PC-9 (cell line): ENCODE measurements at regions of chr1 and their contacts with region 1.

Region 1: GRCh38 chr1:119675349-119676345 is 27.6 kb upstream of the ZNF697 start:
- DNase-seq: peak; percentile 78
- H3K4me3 ChIP-seq: peak overlapping the region; percentile 49
- H3K27ac ChIP-seq: peak overlapping the region; percentile 97
- H3K4me1 ChIP-seq: peaks cover 45% of the 10 kb centered on the region
- H3K27me3 ChIP-seq: no peaks in the 10 kb centered on the region
- CTCF ChIP-seq: peak; percentile 98

Region 2: DNA sequence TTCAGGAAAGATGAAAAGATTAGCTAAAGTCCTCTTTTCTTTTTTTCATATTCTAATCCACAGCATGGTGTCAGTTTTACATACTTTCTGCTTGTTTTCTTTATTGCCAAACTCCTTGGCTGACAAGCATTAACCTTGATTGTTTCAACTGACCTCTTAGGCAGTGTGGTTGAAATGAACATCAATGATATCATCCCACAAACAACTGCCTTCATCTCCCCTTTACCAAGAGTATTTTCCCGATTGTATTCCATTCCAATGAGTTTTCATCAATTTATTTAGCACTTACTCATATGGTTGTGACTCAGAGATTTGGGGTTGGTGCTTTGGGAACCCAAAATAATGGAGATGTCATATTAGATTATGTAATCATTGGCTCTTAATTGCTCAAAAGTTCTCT is 1562.4 kb before region 1 on chr1:
- CTCF ChIA-PET with region 1: no interaction called
- POLR2A ChIA-PET with region 1: no interaction called
- intact Hi-C with region 1: no loop called
- DNase-seq: peak in 1 of 2 experiments; percentile 40
- H3K4me3 ChIP-seq: no peak overlapping the region
- H3K27ac ChIP-seq: no peak overlapping the region
- H3K4me1 ChIP-seq: no peaks in the 10 kb centered on the region; the same call in 1 of the 2 replicates
- H3K27me3 ChIP-seq: no peaks in the 10 kb centered on the region
- CTCF ChIP-seq: no peak

Region 3: DNA sequence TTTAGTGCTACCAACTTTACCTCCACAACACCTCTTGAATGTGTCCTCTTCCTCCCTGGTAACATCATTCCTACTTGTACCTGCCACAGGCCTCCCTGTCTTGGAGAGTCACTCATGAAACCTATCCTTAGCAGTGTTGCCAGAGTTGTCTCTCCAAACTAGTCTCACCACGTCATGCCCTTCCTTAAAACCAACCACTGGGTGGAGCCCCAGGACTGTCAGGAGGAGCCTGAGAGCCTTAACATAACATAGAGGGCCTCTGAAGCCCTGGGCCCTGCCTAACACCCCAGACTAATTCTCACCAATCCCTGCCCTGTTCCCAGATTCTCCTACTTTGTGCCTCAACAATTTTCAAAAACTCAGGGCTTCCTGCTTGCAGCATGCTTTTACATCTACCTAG is 92.8 kb before region 1 on chr1:
- CTCF ChIA-PET with region 1: no interaction called
- POLR2A ChIA-PET with region 1: no interaction called
- intact Hi-C with region 1: loop called (anchors 1 kb)
- DNase-seq: peak; percentile 49 to 60
- H3K4me3 ChIP-seq: no peak overlapping the region
- H3K27ac ChIP-seq: no peak overlapping the region
- H3K4me1 ChIP-seq: no peaks in the 10 kb centered on the region; the same call in 1 of the 2 replicates
- H3K27me3 ChIP-seq: no peaks in the 10 kb centered on the region
- CTCF ChIP-seq: peak; percentile 80

Region 4: GRCh38 chr1:119647734-119648619 is 27.7 kb before region 1 on chr1 and contains the start of gene ZNF697:
- CTCF ChIA-PET with region 1: interaction called, 5 read pairs
- POLR2A ChIA-PET with region 1: interaction called, 7 read pairs
- intact Hi-C with region 1: loop called (anchors 1 kb)
- DNase-seq: peak; percentile 97 to 98
- H3K4me3 ChIP-seq: peak within 1 kb of the TSS; percentile 99
- H3K27ac ChIP-seq: peak within 1 kb of the TSS; percentile 43
- H3K4me1 ChIP-seq: peaks cover 26% of the 10 kb centered on the region
- H3K27me3 ChIP-seq: no peaks in the 10 kb centered on the region
- CTCF ChIP-seq: peak; percentile 45; the same call in 1 of the 2 replicates
- total RNA-seq, gene ZNF697: 3.6 and 4.1 TPM in 2 replicates

Region 5: DNA sequence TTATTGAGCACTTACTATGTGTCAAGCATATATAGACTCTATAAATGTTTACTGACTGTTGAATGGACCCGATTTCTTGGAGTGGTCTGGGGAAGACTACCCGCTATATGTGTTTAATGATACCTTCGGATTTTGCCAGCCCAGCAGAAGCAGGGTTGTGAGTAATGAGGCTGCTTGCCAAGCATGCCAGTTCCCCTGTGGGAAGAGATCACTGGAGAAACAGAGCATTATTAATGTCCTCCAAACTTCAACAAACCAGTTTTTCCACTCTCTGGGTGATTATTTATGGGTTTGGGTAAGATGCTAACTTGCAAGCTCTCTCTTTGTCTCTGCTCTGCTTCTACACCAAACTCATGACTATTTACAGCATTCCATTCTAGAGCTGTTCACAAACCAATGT is 11.0 kb after region 1 on chr1:
- CTCF ChIA-PET with region 1: interaction called, 4 read pairs
- POLR2A ChIA-PET with region 1: no interaction called
- intact Hi-C with region 1: loop called (anchors 1 kb)
- DNase-seq: peak; percentile 70 to 99
- H3K4me3 ChIP-seq: peak overlapping the region; percentile 17; the same call in 1 of the 2 replicates
- H3K27ac ChIP-seq: peak overlapping the region; percentile 82
- H3K4me1 ChIP-seq: peaks cover 47% of the 10 kb centered on the region
- H3K27me3 ChIP-seq: no peaks in the 10 kb centered on the region
- CTCF ChIP-seq: no peak

Region 6: GRCh38 chr1:119711804-119712341 is 36.2 kb after region 1 on chr1 and contains the start of gene PHGDH:
- CTCF ChIA-PET with region 1: interaction called, 3 read pairs
- POLR2A ChIA-PET with region 1: interaction called, 7 read pairs
- intact Hi-C with region 1: loop called (anchors 1 kb)
- DNase-seq: peak; percentile 78 to 89
- H3K4me3 ChIP-seq: peak within 1 kb of the TSS; percentile 93
- H3K27ac ChIP-seq: peak within 1 kb of the TSS; percentile 85
- H3K4me1 ChIP-seq: peaks cover 34% of the 10 kb centered on the region
- H3K27me3 ChIP-seq: no peaks in the 10 kb centered on the region
- CTCF ChIP-seq: no peak
- total RNA-seq, gene PHGDH: 373 and 569 TPM in 2 replicates

Region 7: DNA sequence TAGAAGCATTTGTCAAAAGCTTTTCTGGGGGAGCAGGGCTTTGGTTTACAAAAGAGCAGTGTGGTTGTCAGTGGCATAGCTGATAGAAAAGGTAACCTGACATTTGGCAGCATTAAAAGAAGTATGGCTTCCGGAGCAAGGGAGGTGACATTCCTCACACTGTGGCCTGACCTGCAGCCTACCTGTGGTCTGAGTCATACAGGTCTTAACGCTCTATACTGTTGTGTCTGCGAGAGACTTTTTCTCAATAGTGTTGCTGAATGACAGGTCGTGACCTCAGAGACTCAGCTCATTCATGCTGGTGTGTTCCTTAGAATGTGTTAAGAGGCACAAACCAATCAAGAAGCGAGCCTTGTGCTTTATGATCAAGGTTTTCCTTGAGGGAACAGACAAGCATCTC is 55.4 kb after region 1 on chr1:
- CTCF ChIA-PET with region 1: interaction called, 6 read pairs
- POLR2A ChIA-PET with region 1: no interaction called
- intact Hi-C with region 1: loop called (anchors 1 kb)
- DNase-seq: peak; percentile 78 to 99
- H3K4me3 ChIP-seq: no peak overlapping the region
- H3K27ac ChIP-seq: peak overlapping the region; percentile 37
- H3K4me1 ChIP-seq: peaks cover 50% of the 10 kb centered on the region
- H3K27me3 ChIP-seq: no peaks in the 10 kb centered on the region
- CTCF ChIP-seq: no peak

Region 8: DNA sequence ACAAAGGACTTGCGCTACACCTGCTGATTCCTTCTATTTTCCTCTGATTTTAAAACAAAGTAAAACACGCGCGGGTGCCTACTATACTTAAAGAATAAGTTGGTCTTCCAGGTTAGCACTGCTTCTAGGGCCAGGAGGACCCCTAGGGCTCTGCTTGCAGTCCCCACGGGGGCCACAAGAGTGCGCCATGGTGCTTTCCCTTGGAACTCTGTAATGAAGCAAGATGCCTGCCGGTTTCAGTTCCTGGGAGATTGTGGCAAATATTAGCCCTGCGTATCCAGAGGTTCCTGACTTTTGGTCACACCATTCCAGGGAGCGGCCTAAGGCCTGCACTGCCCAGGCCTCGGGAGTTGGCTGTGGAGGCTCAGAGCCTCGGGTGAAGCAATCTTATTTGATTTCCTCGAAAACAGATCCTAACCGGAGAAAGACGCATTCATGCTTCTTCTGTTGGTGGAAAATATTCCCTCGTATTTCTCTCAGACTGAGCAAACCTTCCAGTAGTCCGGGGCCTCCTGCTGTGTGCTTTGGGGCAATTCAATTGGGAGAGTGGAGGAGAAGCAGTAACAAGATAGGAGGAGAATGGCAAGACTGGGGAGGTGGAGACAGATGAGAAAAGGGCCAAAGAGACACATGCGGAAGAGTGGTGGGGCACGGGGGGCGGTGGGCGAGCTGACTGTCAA is 195.4 kb after region 1 on chr1:
- CTCF ChIA-PET with region 1: no interaction called
- POLR2A ChIA-PET with region 1: no interaction called
- intact Hi-C with region 1: loop called (anchors 5 kb)
- DNase-seq: peak; percentile 61 to 86
- H3K4me3 ChIP-seq: peak overlapping the region; percentile 21; the same call in 1 of the 2 replicates
- H3K27ac ChIP-seq: no peak overlapping the region
- H3K4me1 ChIP-seq: no peaks in the 10 kb centered on the region
- H3K27me3 ChIP-seq: no peaks in the 10 kb centered on the region
- CTCF ChIP-seq: peak; percentile 99